Gastrocnemius medialis (tissue), 4 donors: ENCODE measurements at regions of chr12 and their contacts with region 1.

Region 1: GRCh38 chr12:45298716-45299692 is 83.1 kb downstream of the ANO6 start:
- DNase-seq: no peak
- ATAC-seq: peak; percentile 23 to 58
- H3K4me3 ChIP-seq: no peak overlapping the region
- H3K27ac ChIP-seq: peak overlapping the region; percentile 65 to 93 (median 90)
- H3K4me1 ChIP-seq: peaks cover 79 to 82% of the 10 kb centered on the region in 2 donors
- H3K27me3 ChIP-seq: no peaks in the 10 kb centered on the region
- CTCF ChIP-seq: no peak
- POLR2A ChIP-seq: no peak

Region 2: GRCh38 chr12:45205165-45205825 is 93.7 kb before region 1 on chr12:
- in situ Hi-C with region 1: no loop called
- intact Hi-C with region 1: no loop called
- DNase-seq: no peak
- ATAC-seq: no peak
- H3K4me3 ChIP-seq: no peak overlapping the region
- H3K27ac ChIP-seq: peak overlapping the region in 2 of 4 donors; percentile 2 to 50
- H3K4me1 ChIP-seq: no peaks in the 10 kb centered on the region
- H3K27me3 ChIP-seq: no peaks in the 10 kb centered on the region
- CTCF ChIP-seq: no peak
- POLR2A ChIP-seq: no peak

Region 3: GRCh38 chr12:45284131-45284901 is 14.7 kb before region 1 on chr12:
- in situ Hi-C with region 1: no loop called
- intact Hi-C with region 1: no loop called
- DNase-seq: no peak
- ATAC-seq: no peak
- H3K4me3 ChIP-seq: no peak overlapping the region
- H3K27ac ChIP-seq: peak overlapping the region in 2 of 4 donors; percentile 45 to 47
- H3K4me1 ChIP-seq: peaks cover 22 to 27% of the 10 kb centered on the region in 2 donors
- H3K27me3 ChIP-seq: no peaks in the 10 kb centered on the region
- CTCF ChIP-seq: no peak
- POLR2A ChIP-seq: no peak

Region 4: GRCh38 chr12:45336331-45337064 is 37.5 kb after region 1 on chr12:
- in situ Hi-C with region 1: no loop called
- intact Hi-C with region 1: loop called (anchors 5 kb)
- DNase-seq: no peak
- ATAC-seq: peak; percentile 49 to 54
- H3K4me3 ChIP-seq: no peak overlapping the region
- H3K27ac ChIP-seq: peak overlapping the region; percentile 63 to 80 (median 74)
- H3K4me1 ChIP-seq: peaks cover 27 to 28% of the 10 kb centered on the region in 2 donors
- H3K27me3 ChIP-seq: no peaks in the 10 kb centered on the region
- CTCF ChIP-seq: no peak
- POLR2A ChIP-seq: no peak

Region 5: GRCh38 chr12:45349911-45350310 is 50.9 kb after region 1 on chr12:
- in situ Hi-C with region 1: no loop called
- intact Hi-C with region 1: no loop called
- DNase-seq: no peak
- ATAC-seq: no peak
- H3K4me3 ChIP-seq: no peak overlapping the region
- H3K27ac ChIP-seq: peak overlapping the region in 3 of 4 donors; percentile 15 to 49 (median 42)
- H3K4me1 ChIP-seq: peaks cover 14 to 24% of the 10 kb centered on the region in 2 donors
- H3K27me3 ChIP-seq: no peaks in the 10 kb centered on the region
- CTCF ChIP-seq: no peak
- POLR2A ChIP-seq: no peak